ENCODE measurements at regions of chr11 and their contacts with region 1.

Region 1: DNA sequence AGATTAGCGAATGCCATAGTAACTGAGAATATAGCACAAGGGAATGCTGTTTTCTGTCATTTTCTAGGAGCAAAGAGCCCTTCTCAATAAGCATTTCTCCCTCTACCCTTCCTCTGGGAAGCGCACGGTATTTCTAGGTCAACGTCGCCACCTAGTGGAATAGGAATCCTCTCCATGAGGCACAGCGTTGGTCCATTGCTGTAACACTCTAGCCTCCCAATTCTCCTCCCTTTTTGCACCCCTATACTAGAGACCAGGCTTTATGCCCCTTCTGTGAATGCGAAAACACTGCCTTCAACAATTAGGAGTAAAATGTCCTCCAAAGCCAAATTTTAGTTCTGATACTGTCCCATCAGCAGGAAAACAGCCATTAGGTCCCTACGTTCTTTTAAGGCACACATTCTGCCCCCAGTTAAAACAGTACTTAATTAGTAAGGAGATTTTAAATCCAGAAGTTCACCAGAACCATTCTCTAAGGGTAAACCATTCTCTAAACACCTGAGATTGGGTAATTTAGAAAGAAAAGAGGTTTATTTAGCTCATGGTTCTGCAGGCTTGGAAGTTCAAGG is 12.8 kb upstream of the HYLS1 start:
- DNase-seq: peak; percentile 65

Region 2: GRCh38 chr11:125887373-125888324 is 13.0 kb after region 1 on chr11 and contains the start of gene HYLS1:
- CTCF ChIA-PET with region 1: interaction called, 5 read pairs
- POLR2A ChIA-PET with region 1: interaction called, 16 read pairs
- DNase-seq: peak; percentile 86